IMR-90 (cell line): ENCODE measurements at regions of chr5 and their contacts with region 1.

Region 1: DNA sequence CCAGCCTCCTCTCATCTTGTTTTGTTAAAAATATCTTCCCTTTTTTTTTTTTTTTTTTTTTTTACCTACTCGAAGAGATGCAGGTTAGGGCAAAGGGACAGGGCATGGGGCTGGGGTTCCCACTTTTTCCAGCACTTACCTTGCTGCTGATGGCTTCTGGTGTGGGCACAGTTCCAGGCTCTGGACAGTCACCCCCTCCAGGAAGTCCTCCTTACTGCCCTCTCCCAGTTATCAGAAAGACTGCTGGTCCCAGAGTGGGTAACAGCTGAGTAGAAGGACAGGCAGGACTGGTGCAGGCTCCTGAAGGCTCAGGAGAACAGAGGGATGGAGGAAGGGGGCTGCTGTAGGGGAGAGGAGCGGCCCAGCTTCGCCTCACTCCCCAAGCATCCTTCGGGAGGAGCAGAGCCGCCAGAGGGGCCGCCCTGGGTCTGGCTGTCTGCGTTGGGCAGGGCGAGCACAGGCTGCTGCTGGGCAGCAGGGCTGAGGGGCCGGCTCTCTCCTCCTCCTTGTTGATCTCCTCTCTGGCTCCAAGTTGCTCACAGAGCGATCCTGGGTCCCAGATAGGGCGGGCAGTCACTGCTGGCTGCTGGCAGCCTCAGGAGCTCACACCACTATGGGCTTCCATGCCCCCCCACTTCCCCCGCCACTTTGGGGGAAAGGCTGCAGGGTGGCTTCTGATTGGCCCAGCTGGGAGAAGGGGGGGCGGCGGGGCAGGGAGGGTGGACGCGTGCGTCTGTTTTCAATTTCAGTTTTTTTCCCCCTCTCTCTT is at the start of gene PDGFRB:
- DNase-seq: peak; percentile 89
- ATAC-seq: peak; percentile 79
- H3K4me3 ChIP-seq: peak within 1 kb of the TSS; percentile 76
- H3K27ac ChIP-seq: peak within 1 kb of the TSS; percentile 91
- H3K4me1 ChIP-seq: peaks cover 46% of the 10 kb centered on the region
- H3K27me3 ChIP-seq: no peaks in the 10 kb centered on the region
- CTCF ChIP-seq: 0 out of 2 replicates have a peak, but pooled peaks have one; percentile 3
- POLR2A ChIP-seq: peak; percentile 91
- RAD21 ChIP-seq: no peak
- total RNA-seq, gene PDGFRB: 81.9 and 108 TPM in 2 replicates

Region 2: GRCh38 chr5:150143350-150144245 is 11.8 kb before region 1 on chr5:
- CTCF ChIA-PET with region 1: interaction called, 5 read pairs
- POLR2A ChIA-PET with region 1: interaction called, 10 read pairs
- dilution Hi-C with region 1: no loop called
- in situ Hi-C with region 1: no loop called
- intact Hi-C with region 1: loop called (anchors 1 kb)
- DNase-seq: peak; percentile 96
- ATAC-seq: peak; percentile 36
- H3K4me3 ChIP-seq: no peak overlapping the region
- H3K27ac ChIP-seq: peak overlapping the region; percentile 98
- H3K4me1 ChIP-seq: peaks cover 60% of the 10 kb centered on the region
- H3K27me3 ChIP-seq: no peaks in the 10 kb centered on the region
- CTCF ChIP-seq: no peak
- POLR2A ChIP-seq: peak; percentile 50
- RAD21 ChIP-seq: peak; percentile 25; the same call in 1 of the 2 replicates